Activated B cell treated with CpG ODN at 0.5 μM for 24 hours (primary cell): ENCODE measurements at regions of chr11 and their contacts with region 1.

Region 1: GRCh38 chr11:62591448-62592145 is at the start of gene TUT1:
- DNase-seq: peak; percentile 83
- ATAC-seq: peak; percentile 85
- H3K4me3 Mint-ChIP-seq: peak within 1 kb of the TSS; percentile 97
- H3K27ac Mint-ChIP-seq: peak within 1 kb of the TSS; percentile 98
- H3K4me1 Mint-ChIP-seq: peaks cover 52% of the 10 kb centered on the region
- H3K27me3 Mint-ChIP-seq: no peaks in the 10 kb centered on the region
- CTCF ChIP-seq: no peak
- total RNA-seq, gene TUT1: 27.8 and 30.9 TPM in 2 replicates

Region 2: GRCh38 chr11:62508268-62509058 is 83.1 kb before region 1 on chr11:
- CTCF ChIA-PET with region 1: no interaction called
- POLR2A ChIA-PET with region 1: no interaction called
- intact Hi-C with region 1: no loop called
- DNase-seq: no peak
- ATAC-seq: peak; percentile 87
- H3K4me3 Mint-ChIP-seq: no peak overlapping the region
- H3K27ac Mint-ChIP-seq: no peak overlapping the region
- H3K4me1 Mint-ChIP-seq: peaks cover 8% of the 10 kb centered on the region
- H3K27me3 Mint-ChIP-seq: peaks cover 1% of the 10 kb centered on the region
- CTCF ChIP-seq: no peak

Region 3: DNA sequence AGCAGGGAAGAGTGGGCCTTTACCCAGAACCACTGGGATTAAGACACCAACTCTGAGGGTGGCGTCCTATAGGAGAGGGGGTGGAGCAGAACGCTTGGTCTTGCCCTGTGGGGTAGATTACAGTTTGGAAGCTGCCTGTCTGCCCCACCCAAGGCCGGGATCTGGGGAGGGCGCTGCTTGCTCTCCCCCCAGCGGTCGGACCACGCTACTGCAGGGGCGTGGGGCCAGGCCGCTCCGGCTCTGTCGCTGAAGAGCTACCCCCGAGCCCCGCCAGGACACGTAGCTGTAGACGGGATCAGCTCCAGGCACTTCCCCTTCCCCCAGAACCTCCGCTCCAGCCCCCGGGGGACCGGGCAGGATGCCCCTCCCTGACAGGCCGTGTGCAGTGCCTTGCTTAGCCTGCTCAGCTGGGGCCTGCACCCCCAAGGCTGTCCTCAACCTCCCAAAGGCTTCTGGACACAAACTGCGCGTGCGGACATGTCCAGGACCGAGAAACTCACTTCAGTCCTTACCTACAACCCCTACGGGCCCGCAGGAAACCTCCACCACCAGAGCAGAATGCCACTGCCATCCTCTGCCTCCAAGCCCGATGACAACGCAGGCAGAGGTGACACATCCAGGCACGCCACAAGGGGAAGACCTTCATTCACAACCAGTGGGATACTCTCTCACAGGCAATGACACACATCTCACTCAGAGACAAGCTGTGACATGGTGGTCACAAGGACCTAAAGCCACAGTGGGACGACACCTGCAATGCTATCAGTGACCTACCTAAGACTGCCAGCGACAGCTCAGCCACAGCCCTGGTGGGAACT is 48.6 kb before region 1 on chr11:
- CTCF ChIA-PET with region 1: interaction called, 22 read pairs
- POLR2A ChIA-PET with region 1: interaction called, 73 read pairs
- intact Hi-C with region 1: loop called (anchors 1 kb)
- DNase-seq: peak; percentile 74
- ATAC-seq: peak; percentile 29
- H3K4me3 Mint-ChIP-seq: peak overlapping the region; percentile 95
- H3K27ac Mint-ChIP-seq: peak overlapping the region; percentile 97
- H3K4me1 Mint-ChIP-seq: peaks cover 78% of the 10 kb centered on the region
- H3K27me3 Mint-ChIP-seq: no peaks in the 10 kb centered on the region
- CTCF ChIP-seq: peak; percentile 78

Region 4: DNA sequence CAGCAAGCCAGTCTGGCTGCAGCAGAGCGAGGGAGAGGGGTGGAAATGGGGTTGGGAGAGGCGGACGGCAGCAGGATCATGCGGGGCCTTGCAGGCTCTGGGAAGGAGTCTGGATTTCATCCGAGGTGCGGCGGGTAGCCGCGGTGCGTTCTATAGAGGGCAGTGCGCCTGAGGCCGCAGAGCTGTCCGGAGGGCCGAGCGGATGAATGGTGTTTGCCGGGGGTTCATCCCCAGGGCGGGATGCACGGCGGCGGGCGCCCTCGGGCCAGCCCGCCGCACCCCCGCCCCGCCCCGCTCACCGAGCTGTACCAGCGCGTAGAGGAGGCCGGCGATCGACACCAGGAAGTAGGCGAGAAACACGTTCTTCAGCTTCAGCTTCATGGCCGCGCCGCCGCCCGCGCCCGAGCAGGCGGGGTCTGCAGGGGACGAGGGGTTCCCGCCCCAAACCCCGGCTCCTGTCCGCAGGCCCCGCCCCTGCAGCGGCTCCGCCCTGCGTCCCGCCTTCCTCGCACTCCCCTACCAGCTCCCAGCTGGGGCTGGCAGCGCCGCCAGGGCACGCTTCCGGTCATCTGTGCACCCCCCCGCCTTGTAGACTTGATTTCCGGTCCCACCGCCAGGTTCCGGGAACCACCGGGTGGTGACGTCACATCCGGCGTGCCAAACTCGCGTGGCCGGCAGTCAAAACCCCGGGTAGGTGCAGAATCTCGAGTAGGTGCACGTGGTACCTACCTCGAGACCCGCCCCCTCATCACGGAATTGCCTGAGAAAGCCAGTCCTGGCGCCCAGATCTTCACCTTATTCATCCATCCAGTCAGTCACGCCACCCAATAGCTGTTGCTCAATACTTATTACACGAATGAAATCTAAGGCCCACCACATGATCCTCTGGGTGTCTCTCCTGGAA is 30.2 kb after region 1 on chr11 and contains the start of gene B3GAT3:
- CTCF ChIA-PET with region 1: interaction called, 16 read pairs
- POLR2A ChIA-PET with region 1: interaction called, 109 read pairs
- intact Hi-C with region 1: loop called (anchors 1 kb)
- DNase-seq: peak; percentile 93
- ATAC-seq: peak; percentile 92
- H3K4me3 Mint-ChIP-seq: peak within 1 kb of the TSS; percentile 90
- H3K27ac Mint-ChIP-seq: peak within 1 kb of the TSS; percentile 93
- H3K4me1 Mint-ChIP-seq: peaks cover 19% of the 10 kb centered on the region
- H3K27me3 Mint-ChIP-seq: no peaks in the 10 kb centered on the region
- CTCF ChIP-seq: no peak
- total RNA-seq, gene B3GAT3: 48.8 and 56.6 TPM in 2 replicates

Region 5: DNA sequence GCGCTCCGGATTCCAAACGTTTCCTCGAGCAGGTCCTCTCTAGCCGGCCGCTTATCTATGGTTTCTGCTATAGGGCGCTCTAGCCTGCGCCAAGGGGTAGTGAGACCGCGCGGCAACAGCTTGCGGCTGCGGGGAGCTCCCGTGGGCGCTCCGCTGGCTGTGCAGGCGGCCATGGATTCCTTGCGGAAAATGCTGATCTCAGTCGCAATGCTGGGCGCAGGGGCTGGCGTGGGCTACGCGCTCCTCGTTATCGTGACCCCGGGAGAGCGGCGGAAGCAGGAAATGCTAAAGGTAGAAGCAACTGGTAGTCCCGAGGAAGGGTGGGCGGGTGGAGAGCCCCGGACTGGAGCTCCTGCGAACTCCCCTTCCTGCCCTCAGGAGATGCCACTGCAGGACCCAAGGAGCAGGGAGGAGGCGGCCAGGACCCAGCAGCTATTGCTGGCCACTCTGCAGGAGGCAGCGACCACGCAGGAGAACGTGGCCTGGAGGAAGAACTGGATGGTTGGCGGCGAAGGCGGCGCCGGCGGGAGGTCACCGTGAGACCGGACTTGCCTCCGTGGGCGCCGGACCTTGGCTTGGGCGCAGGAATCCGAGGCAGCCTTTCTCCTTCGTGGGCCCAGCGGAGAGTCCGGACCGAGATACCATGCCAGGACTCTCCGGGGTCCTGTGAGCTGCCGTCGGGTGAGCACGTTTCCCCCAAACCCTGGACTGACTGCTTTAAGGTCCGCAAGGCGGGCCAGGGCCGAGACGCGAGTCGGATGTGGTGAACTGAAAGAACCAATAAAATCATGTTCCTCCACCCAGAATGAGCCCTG is 80.2 kb after region 1 on chr11 and contains the starts of genes LBHD1 and UQCC3:
- CTCF ChIA-PET with region 1: interaction called, 3 read pairs
- POLR2A ChIA-PET with region 1: interaction called, 51 read pairs
- intact Hi-C with region 1: no loop called
- DNase-seq: peak; percentile 61
- ATAC-seq: peak; percentile 82
- H3K4me3 Mint-ChIP-seq: peak within 1 kb of the TSS; percentile 100
- H3K27ac Mint-ChIP-seq: peak within 1 kb of the TSS; percentile 98
- H3K4me1 Mint-ChIP-seq: peaks cover 62% of the 10 kb centered on the region
- H3K27me3 Mint-ChIP-seq: no peaks in the 10 kb centered on the region
- CTCF ChIP-seq: no peak
- total RNA-seq, gene LBHD1: 19.1 and 24.9 TPM in 2 replicates
- total RNA-seq, gene UQCC3: 8.3 and 9.4 TPM in 2 replicates

Region 6: GRCh38 chr11:62726915-62727763 is 135.5 kb after region 1 on chr11 and contains the start of gene HNRNPUL2:
- CTCF ChIA-PET with region 1: interaction called, 3 read pairs
- POLR2A ChIA-PET with region 1: interaction called, 46 read pairs
- intact Hi-C with region 1: loop called (anchors 1 kb)
- DNase-seq: peak; percentile 97
- ATAC-seq: peak; percentile 84
- H3K4me3 Mint-ChIP-seq: peak within 1 kb of the TSS; percentile 98
- H3K27ac Mint-ChIP-seq: peak within 1 kb of the TSS; percentile 98
- H3K4me1 Mint-ChIP-seq: peaks cover 55% of the 10 kb centered on the region
- H3K27me3 Mint-ChIP-seq: no peaks in the 10 kb centered on the region
- CTCF ChIP-seq: no peak
- total RNA-seq, gene HNRNPUL2: 58.2 and 63.9 TPM in 2 replicates

Region 7: DNA sequence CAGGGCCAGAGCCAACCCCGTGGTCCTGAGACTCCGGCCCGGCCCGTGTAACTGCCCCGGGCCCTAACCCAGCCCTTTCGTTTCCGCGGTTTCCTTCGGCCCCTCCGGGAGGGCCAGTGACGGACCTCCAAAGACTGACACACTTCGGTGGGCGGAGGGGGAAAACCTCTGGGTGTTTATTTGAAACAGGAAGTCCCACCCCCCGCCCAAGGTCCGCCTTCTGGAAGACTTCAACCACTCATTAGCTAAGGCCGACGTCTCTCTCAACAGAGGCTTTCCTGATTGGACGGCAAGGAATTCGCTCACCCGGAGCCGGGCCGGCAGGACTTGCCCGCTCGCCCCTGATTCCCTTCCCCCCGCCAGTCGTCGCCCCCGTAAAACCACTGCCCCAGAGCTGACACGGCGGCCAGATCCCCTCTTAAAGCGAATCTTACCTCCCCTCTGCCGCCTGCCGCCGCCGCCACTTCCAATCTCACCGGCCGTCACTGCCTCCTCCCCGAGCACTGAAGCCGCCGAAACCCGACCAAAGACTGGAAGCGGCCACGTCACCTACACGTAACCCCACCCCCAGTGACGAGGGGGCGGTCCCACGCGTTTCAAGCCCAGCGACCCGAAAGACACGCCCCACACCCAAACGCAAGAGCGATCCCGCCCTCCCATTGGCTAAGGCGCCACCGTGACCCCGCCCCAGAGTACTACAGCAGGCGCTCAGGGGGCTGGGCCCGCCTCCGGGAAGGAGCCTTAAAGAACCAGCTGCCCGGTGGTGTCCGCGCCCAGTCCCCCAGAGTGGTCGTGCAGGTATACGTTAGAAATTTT is 240.1 kb after region 1 on chr11 and contains the start of gene STX5:
- CTCF ChIA-PET with region 1: no interaction called
- POLR2A ChIA-PET with region 1: interaction called, 16 read pairs
- intact Hi-C with region 1: no loop called
- DNase-seq: peak; percentile 98
- ATAC-seq: peak; percentile 91
- H3K4me3 Mint-ChIP-seq: peak within 1 kb of the TSS; percentile 100
- H3K27ac Mint-ChIP-seq: peak within 1 kb of the TSS; percentile 100
- H3K4me1 Mint-ChIP-seq: peaks cover 47% of the 10 kb centered on the region
- H3K27me3 Mint-ChIP-seq: no peaks in the 10 kb centered on the region
- CTCF ChIP-seq: no peak
- total RNA-seq, gene STX5: 58.4 and 71.5 TPM in 2 replicates

Region 8: GRCh38 chr11:62880803-62881578 is 289.4 kb after region 1 on chr11 and contains the start of gene SLC3A2:
- CTCF ChIA-PET with region 1: interaction called, 7 read pairs
- POLR2A ChIA-PET with region 1: interaction called, 43 read pairs
- intact Hi-C with region 1: loop called (anchors 1 kb)
- DNase-seq: peak; percentile 86
- ATAC-seq: peak; percentile 80
- H3K4me3 Mint-ChIP-seq: peak within 1 kb of the TSS; percentile 100
- H3K27ac Mint-ChIP-seq: peak within 1 kb of the TSS; percentile 100
- H3K4me1 Mint-ChIP-seq: peaks cover 46% of the 10 kb centered on the region
- H3K27me3 Mint-ChIP-seq: no peaks in the 10 kb centered on the region
- CTCF ChIP-seq: no peak
- total RNA-seq, gene SLC3A2: 270 and 274 TPM in 2 replicates